PC-9 (cell line): ENCODE measurements at regions of chr15 and their contacts with region 1.

Region 1: DNA sequence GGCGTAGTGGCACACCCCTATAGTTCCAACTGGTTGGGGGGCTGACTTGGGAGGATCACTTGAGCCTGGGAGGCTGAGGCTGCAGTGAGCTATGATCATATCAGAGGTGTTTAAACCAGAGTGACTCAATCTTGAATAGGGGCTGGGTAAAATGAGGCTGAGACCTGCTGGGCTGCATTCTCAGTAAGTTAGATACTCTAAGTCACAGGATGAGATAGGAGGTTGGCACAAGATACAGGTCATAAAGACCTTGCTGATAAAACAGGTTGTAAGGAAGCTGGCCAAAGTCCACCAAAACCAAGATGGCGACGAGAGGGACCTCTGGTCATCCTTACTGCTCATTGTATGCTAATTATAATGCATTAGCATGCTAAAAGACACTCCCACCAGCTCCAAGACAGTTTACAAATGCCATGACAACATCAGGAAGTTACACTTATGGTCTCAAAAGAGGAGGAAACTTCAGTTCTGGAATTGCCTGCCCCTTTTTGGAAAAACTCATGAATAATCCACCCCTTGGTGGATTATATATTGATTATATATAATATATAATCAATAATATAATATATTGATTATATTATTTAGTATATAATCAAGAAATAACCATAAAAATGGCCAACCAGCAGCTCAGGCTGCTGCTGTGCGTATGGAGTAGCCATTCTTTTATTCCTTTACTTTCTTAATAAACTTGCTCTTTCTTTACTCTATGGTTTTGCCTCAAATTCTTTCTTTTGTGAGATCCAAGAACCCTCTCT is 71.3 kb upstream of the BNIP2 start:
- DNase-seq: peak; percentile 5 to 39
- H3K4me3 ChIP-seq: no peak overlapping the region
- H3K27ac ChIP-seq: no peak overlapping the region
- H3K4me1 ChIP-seq: no peaks in the 10 kb centered on the region
- H3K27me3 ChIP-seq: no peaks in the 10 kb centered on the region
- CTCF ChIP-seq: no peak

Region 2: GRCh38 chr15:59274126-59274970 is 486.1 kb before region 1 on chr15:
- CTCF ChIA-PET with region 1: no interaction called
- POLR2A ChIA-PET with region 1: no interaction called
- intact Hi-C with region 1: no loop called
- DNase-seq: peak in 1 of 2 experiments; percentile 54
- H3K4me3 ChIP-seq: no peak overlapping the region
- H3K27ac ChIP-seq: peak overlapping the region; percentile 98
- H3K4me1 ChIP-seq: peaks cover 73% of the 10 kb centered on the region
- H3K27me3 ChIP-seq: no peaks in the 10 kb centered on the region
- CTCF ChIP-seq: no peak

Region 3: DNA sequence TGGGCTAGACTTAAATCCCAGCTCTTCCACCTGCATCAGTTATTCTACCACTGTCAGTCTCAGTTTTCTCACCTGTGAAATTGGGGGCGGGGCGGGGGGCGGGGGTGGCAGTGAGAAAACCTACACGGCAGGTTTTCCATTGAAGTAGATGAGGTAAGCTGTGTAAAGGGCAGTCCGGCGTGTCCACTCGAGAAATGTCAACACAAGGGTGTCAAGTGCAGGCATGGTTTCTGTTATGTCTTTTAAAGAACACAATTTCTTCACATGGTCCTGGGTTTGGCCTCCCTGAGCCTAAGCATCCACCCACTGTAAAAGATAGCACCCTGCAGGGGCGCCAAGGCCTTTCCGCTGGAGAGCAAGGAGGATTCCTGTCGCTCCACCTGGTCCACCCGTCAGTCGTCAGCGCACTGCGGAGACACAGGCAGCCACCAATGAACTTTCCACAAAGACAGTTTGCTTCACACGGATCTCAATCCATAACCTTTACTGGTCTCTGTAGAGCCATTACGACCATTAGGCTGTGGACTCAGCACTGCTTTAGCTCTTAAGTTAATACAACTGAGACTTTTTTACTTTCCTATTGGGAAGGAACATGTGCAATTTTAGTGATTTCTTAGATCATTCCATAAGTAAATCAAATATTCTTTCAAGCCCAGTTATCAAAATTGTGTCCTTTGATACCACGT is 144.2 kb after region 1 on chr15:
- CTCF ChIA-PET with region 1: no interaction called
- POLR2A ChIA-PET with region 1: interaction called, 13 read pairs
- intact Hi-C with region 1: no loop called
- DNase-seq: no peak
- H3K4me3 ChIP-seq: no peak overlapping the region
- H3K27ac ChIP-seq: no peak overlapping the region
- H3K4me1 ChIP-seq: no peaks in the 10 kb centered on the region
- H3K27me3 ChIP-seq: no peaks in the 10 kb centered on the region
- CTCF ChIP-seq: no peak

Region 4: DNA sequence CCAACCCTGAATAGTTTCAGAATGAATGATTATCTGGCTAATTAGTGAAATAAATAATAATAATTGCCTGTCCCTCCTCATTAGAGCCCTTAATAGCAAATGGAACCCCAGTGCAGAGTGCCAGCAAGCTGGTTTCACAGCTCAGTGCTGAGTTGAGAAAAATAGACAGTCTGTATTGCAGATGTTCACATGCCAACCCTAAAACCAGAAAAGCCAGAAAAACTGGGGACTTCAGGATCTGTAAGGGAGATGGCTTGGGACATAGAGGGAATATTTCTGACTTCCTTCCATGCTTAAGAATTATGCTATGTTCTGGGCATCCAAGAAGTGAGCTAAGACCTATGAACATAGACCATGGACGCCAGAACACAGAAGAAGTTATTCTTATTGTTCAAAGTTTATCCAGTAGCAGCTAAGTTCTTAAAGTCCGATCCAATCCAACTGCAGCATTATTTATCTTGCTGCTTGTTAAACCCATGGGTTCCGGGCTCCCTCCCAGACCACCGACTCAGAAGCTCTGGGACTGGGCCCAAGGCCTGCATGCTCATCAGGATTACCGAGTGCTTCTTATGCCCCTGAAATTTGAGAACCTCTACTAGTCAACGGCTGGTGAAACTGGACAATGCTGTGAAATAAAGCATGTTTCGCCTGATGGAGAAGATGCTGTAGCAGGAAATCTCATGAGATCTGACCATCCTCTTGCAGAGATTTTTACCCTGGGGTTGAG is 402.0 kb after region 1 on chr15:
- CTCF ChIA-PET with region 1: no interaction called
- POLR2A ChIA-PET with region 1: interaction called, 24 read pairs
- intact Hi-C with region 1: no loop called
- DNase-seq: peak; percentile 18 to 38
- H3K4me3 ChIP-seq: no peak overlapping the region
- H3K27ac ChIP-seq: no peak overlapping the region
- H3K4me1 ChIP-seq: no peaks in the 10 kb centered on the region
- H3K27me3 ChIP-seq: no peaks in the 10 kb centered on the region
- CTCF ChIP-seq: no peak